GM10248 (cell line): ENCODE measurements at regions of chr18 and their contacts with region 1.

Region 1: GRCh38 chr18:11995445-11996189 is 14.3 kb downstream of the IMPA2 start:
- DNase-seq: peak; percentile 82
- CTCF ChIP-seq: peak; percentile 88

Region 2: DNA sequence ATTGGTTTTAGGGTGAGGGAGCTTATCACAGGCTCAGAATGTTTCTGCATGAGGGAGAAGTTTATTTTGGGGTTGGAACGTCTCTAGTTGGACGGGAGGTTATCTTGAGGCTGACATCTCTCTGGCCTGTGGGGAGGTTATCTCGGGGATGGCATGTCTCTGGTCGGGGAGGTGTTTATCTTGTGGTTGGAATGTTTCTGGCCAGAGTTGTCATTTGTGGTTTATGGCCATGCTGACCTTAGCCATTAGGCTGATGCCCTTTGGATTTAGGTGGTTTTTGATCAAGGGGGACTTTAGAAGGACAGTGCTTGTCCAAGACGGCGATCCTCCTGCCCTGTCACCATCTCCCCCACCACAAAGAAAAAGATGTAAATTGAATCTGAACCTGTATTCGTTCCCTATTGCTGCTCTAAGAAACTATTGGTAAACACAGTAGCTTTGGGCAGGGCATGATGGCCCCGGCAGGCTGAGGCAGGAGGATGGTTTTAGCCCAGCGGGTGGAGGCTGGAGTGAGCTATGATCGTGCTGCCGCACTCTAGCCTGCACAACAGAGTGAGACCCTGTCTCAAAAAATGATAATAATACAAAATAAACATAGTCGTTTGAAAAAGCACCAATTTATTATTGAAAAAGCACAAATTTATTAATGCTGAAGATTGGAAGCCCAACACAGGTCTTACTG is 69.7 kb before region 1 on chr18:
- CTCF ChIA-PET with region 1: interaction called, 27 read pairs
- POLR2A ChIA-PET with region 1: no interaction called
- DNase-seq: no peak
- CTCF ChIP-seq: no peak

Region 3: GRCh38 chr18:11937874-11938478 is 57.6 kb before region 1 on chr18:
- CTCF ChIA-PET with region 1: interaction called, 324 read pairs
- POLR2A ChIA-PET with region 1: no interaction called
- DNase-seq: peak; percentile 80
- CTCF ChIP-seq: peak; percentile 58

Region 4: DNA sequence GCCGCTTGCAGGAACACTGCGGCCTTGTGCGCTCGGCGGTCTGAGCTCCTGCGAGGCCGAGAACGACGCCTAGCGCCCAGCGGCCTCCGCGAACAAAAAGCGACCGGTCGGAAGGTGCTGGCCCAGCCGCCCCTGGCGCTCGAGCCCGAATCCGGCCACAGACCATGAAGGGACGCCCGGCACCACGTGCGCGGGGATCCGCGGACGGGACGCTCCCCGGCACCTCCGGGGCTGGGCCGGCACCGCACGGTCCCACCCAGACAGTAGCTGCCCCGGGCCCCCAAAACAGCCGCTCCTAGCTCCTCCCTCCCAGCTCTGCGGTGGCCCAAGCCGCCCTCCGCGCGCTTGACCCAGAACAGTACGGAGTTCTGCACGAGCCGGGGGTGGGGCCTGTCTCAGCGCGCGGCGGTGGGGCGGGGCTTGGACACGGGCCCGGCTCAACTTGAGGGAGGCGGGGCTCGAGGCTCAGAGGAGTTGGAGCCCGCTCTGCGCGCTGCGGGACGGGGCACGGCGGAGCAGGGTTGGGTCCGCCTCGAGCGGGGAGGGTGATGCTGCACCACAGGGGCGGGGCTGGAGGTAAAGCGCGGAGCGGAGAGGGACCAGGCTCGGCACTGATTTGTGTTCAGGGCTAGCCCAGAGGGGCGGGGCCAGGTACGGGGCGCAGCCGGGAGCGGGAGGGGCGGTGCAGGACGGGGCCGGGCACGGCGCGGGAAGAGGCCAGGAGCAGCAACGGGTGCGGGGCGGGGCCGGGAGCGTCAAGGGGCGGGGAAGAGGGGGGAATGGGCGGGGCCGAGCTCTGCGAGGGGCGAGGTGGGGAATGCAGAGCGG is 14.8 kb before region 1 on chr18:
- CTCF ChIA-PET with region 1: interaction called, 38 read pairs
- POLR2A ChIA-PET with region 1: no interaction called
- DNase-seq: peak; percentile 96
- CTCF ChIP-seq: peak; percentile 17

Region 5: GRCh38 chr18:12011957-12012549 is 16.4 kb after region 1 on chr18:
- CTCF ChIA-PET with region 1: interaction called, 11 read pairs
- POLR2A ChIA-PET with region 1: no interaction called
- DNase-seq: no peak
- CTCF ChIP-seq: no peak